CD4-positive, alpha-beta memory T cell (primary cell): ENCODE measurements at regions of chrX and their contacts with region 1.

Region 1: DNA sequence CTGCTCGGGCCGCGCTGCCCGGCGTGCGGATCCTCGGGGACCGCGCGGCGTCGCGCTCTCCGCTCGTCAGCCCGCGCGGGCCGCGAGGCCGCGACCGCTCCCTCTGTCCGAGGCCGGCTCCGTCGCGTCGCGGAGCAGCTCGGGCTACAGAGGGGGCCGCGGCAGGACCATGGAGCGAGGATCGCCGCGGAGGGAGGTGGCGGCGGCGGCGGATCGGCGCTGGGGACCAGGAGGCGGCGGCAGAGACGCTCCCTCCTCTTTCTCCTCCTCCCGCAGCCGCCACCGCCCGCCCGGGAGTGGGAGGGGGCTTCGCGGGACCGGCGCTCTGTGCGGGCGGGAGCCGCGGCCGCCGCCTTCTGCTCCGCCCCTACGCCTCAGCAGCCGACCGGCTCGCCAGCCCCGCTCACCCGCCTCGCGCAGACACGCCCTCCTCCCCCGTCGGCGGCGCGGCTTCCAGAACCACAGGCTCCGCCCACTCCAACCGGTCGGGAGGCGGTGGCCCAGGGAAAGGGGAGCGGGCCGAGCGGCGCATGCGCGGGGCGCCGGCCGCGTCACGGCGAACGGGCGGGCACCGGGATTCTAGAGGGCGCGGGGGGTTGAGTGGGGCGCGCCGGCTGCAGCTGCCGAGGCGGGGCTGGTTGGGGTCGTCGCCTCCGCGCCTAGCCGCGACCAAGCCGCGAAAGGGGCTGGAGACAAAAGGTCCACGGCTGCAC is at the start of gene CASK:
- DNase-seq: peak; percentile 88 to 90 (median 89)
- H3K4me3 ChIP-seq: peak within 1 kb of the TSS; percentile 55 to 72
- H3K4me3 Mint-ChIP-seq: peak within 1 kb of the TSS; percentile 88 to 96 (median 92)
- H3K27ac ChIP-seq: peak within 1 kb of the TSS; percentile 58
- H3K27ac Mint-ChIP-seq: peak within 1 kb of the TSS; percentile 86 to 95 (median 94)
- H3K4me1 ChIP-seq: peaks cover 21% of the 10 kb centered on the region
- H3K4me1 Mint-ChIP-seq: peaks cover 10 to 43% (median 22%) of the 10 kb centered on the region in 4 donors
- H3K27me3 ChIP-seq: no peaks in the 10 kb centered on the region
- H3K27me3 Mint-ChIP-seq: no peaks in the 10 kb centered on the region
- total RNA-seq, gene CASK: 115 to 116 TPM

Region 2: DNA sequence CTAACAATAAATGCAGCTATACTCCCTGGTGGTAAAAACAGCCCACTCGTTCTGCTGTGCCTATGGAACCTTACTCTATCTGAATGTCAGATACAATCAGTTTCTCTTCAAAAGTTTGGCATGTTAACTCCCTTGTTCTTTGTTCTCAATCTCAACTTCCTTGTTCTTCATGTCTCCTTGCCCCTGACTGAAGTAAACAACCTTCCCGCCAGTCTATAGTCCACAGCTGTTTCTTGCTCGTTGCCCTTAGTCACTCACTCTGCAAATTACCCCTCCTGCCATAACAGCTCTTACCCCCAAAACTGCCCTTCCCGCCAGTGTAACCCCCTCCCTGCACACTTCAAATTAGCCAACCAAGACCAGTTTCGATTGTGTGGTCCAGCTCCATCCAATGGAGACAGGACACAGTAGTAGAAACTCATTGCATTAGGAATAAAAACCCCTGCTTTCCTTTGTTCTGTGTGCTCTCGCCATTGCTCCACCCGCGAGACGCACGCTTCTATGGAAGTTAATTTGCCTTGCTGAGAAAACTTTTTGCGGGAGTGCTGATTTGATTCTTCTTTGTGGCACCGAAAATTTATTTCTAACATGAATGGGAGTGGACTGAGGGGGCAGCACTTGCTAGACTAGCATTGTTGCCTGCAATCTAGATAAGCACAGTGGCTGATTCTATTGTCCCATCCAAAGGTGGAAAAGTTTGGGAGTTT is 206.5 kb before region 1 on chrX:
- CTCF ChIA-PET with region 1: no interaction called
- POLR2A ChIA-PET with region 1: no interaction called
- intact Hi-C with region 1: no loop called
- DNase-seq: no peak
- H3K4me3 ChIP-seq: no peak overlapping the region
- H3K4me3 Mint-ChIP-seq: peak overlapping the region in 2 of 8 donors; percentile 10 to 42
- H3K27ac ChIP-seq: no peak overlapping the region
- H3K27ac Mint-ChIP-seq: peak overlapping the region in 3 of 7 donors; percentile 31 to 65 (median 56)
- H3K4me1 ChIP-seq: peaks cover 21% of the 10 kb centered on the region
- H3K4me1 Mint-ChIP-seq: peaks cover 14 to 31% (median 25%) of the 10 kb centered on the region in 4 donors
- H3K27me3 ChIP-seq: no peaks in the 10 kb centered on the region
- H3K27me3 Mint-ChIP-seq: no peaks in the 10 kb centered on the region

Region 3: DNA sequence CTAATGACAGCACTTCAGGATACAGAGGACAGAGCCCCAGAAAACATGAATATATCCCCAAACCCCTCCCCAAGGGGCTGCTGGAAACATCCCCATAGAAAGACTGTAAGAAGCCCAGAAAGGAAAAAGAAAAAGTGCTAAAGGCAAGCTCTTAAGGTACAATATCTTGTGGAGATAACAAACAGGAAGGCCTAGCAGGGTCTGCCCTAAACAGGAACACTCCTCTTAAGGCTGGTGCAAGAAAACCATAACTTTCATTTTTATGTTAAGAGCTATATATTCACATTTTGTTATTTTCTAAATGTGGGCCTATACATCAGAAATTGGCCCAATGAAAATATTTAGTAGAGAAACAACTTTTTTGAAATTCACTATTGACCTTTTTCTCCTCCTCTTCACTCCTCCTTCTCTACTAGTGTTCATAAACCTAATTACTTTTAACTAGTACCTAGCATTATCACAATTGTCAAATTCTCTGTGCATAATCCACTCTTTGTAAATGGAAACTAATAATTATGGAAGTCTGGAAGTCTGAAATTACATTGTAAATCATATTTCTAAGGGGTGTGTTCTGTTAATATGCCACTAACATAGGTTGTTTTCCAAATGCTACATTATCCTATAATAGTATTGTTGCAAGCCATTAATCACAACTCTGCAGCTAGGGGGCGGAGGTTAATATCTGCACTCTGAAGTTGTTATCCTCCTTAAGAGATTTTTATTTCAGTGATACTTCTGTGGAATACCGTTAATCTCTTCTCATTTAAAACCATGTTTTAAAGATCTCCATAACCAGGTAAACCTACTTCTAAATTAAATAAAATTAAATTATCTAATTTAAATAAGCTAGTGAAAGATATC is 59.8 kb before region 1 on chrX:
- CTCF ChIA-PET with region 1: interaction called, 3 read pairs
- POLR2A ChIA-PET with region 1: interaction called, 3 read pairs
- intact Hi-C with region 1: loop called (anchors 5 kb)
- DNase-seq: peak in 3 of 5 donors; percentile 8 to 23 (median 12)
- H3K4me3 ChIP-seq: no peak overlapping the region
- H3K4me3 Mint-ChIP-seq: peak overlapping the region in 6 of 8 donors; percentile 9 to 76 (median 54)
- H3K27ac ChIP-seq: no peak overlapping the region
- H3K27ac Mint-ChIP-seq: peak overlapping the region in 6 of 7 donors; percentile 19 to 81 (median 66)
- H3K4me1 ChIP-seq: peaks cover 45% of the 10 kb centered on the region
- H3K4me1 Mint-ChIP-seq: peaks cover 34 to 64% (median 45%) of the 10 kb centered on the region in 4 donors
- H3K27me3 ChIP-seq: no peaks in the 10 kb centered on the region
- H3K27me3 Mint-ChIP-seq: no peaks in the 10 kb centered on the region

Region 4: DNA sequence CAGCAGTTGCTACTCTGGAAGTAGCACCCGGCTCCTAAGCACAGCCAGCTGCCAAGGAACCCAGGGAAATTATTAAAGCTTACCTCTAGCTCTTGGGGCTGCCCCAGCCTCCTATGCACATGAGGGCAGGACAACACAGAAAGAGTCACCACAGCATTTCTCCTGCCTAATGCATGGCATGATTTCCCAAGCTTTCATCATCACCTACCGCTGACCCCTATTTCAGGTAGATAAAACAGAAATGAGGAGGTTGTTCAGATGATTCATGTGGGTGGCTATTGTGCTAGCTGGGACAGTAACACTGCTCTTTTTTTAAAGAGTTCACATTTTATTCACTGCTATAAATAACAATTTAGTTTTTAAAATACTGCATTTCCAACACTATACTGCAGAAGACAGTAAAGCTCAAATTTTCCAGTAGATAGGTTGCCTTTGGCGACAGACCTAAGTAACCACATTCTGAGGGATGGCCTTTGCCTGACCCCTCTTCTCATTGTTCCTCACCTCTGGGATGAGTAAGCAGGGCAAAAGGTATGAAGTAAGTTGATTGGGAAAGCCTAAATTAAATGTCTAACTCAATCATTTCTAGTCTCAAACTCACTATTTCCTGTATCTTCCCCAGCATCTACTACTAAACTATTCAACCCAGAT is 16.8 kb before region 1 on chrX:
- CTCF ChIA-PET with region 1: no interaction called
- POLR2A ChIA-PET with region 1: interaction called, 11 read pairs
- intact Hi-C with region 1: loop called (anchors 2 kb)
- DNase-seq: no peak
- H3K4me3 ChIP-seq: no peak overlapping the region
- H3K4me3 Mint-ChIP-seq: peak overlapping the region in 1 of 8 donors; percentile 81
- H3K27ac ChIP-seq: no peak overlapping the region
- H3K27ac Mint-ChIP-seq: peak overlapping the region in 3 of 7 donors; percentile 5 to 75 (median 19)
- H3K4me1 ChIP-seq: peaks cover 42% of the 10 kb centered on the region
- H3K4me1 Mint-ChIP-seq: peaks cover 27 to 69% (median 49%) of the 10 kb centered on the region in 4 donors
- H3K27me3 ChIP-seq: no peaks in the 10 kb centered on the region
- H3K27me3 Mint-ChIP-seq: no peaks in the 10 kb centered on the region

Region 5: DNA sequence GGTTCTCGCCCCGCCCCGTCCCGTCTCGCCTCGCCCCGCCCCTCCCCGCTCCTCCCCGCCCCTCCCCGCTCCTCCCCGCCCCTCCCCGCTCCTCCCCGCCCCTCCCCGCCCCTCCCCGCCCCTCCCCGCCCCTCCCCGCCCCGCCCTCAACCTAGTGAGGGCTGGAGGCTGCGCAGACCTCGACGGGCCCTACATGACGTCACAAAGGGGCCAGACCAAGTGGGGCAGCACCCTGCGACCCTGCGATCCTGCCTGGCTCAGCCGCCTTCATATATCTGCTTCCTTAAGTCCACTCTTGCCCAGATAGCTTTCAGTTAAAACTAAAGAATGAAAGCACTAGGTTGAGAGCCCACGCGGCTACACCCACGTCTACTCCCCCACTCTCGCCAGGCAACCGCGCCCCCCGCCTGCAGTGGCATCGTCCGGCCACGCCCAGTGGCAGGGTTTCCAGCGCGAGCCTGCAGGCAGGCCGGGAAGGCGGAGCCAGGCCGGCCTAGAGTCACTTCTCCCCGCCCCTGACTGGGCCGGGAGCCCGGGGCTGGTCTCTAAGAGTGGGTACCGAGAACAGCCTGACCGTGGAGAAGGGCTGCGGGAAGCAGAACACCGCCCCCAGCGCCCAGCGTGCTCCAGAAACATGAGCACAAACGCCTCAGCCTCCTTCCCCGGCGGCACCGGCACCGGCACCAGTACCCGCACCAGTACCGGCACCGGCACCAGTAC is 1731.2 kb after region 1 on chrX:
- CTCF ChIA-PET with region 1: no interaction called
- POLR2A ChIA-PET with region 1: no interaction called
- intact Hi-C with region 1: loop called (anchors 2 kb)
- DNase-seq: peak; percentile 87 to 90 (median 89)
- H3K4me3 ChIP-seq: peak overlapping the region in 1 of 2 donors; percentile 55
- H3K4me3 Mint-ChIP-seq: peak overlapping the region; percentile 79 to 95 (median 88)
- H3K27ac ChIP-seq: peak overlapping the region; percentile 67
- H3K27ac Mint-ChIP-seq: peak overlapping the region; percentile 93 to 99 (median 98)
- H3K4me1 ChIP-seq: no peaks in the 10 kb centered on the region
- H3K4me1 Mint-ChIP-seq: peaks cover 2 to 8% (median 6%) of the 10 kb centered on the region in 4 donors
- H3K27me3 ChIP-seq: no peaks in the 10 kb centered on the region
- H3K27me3 Mint-ChIP-seq: peaks cover 0 to 1% of the 10 kb centered on the region in 2 donors